ENCODE measurements at regions of chr1 and their contacts with region 1.

Region 1: GRCh38 chr1:66981679-66982078 is 56.9 kb downstream of the MIER1 start:
- DNase-seq: peak in 33 of 35 experiments; percentile 22 to 81 (median 42)
- ATAC-seq: peak; percentile 82 to 91 (median 86)
- H3K4me3 ChIP-seq: peak overlapping the region; percentile 43 to 44
- H3K4me3 Mint-ChIP-seq: peak overlapping the region; percentile 61 to 71 (median 71)
- H3K27ac ChIP-seq: peak overlapping the region; percentile 88
- H3K27ac Mint-ChIP-seq: peak overlapping the region; percentile 89 to 90
- H3K4me1 ChIP-seq: peaks cover 0 to 13% of the 10 kb centered on the region in 2 experiments
- H3K4me1 Mint-ChIP-seq: peaks cover 18 to 37% (median 33%) of the 10 kb centered on the region in 3 donors
- H3K27me3 ChIP-seq: no peaks in the 10 kb centered on the region
- H3K27me3 Mint-ChIP-seq: no peaks in the 10 kb centered on the region

Region 2: GRCh38 chr1:66924756-66925557 is 56.7 kb before region 1 on chr1 and contains the starts of genes DNAI4 and MIER1:
- CTCF ChIA-PET with region 1: interaction called in 1 of 2 experiments, 3 read pairs
- POLR2A ChIA-PET with region 1: interaction called in 1 of 2 experiments, 11 read pairs
- DNase-seq: peak; percentile 88 to 97 (median 95)
- ATAC-seq: peak; percentile 92 to 96 (median 95)
- H3K4me3 ChIP-seq: peak within 1 kb of the TSS; percentile 89 to 92
- H3K4me3 Mint-ChIP-seq: peak within 1 kb of the TSS; percentile 94 to 96 (median 94)
- H3K27ac ChIP-seq: peak within 1 kb of the TSS; percentile 97
- H3K27ac Mint-ChIP-seq: peak within 1 kb of the TSS; percentile 94 to 96
- H3K4me1 ChIP-seq: peaks cover 23 to 27% of the 10 kb centered on the region in 2 experiments
- H3K4me1 Mint-ChIP-seq: peaks cover 53 to 56% (median 54%) of the 10 kb centered on the region in 3 donors
- H3K27me3 ChIP-seq: no peaks in the 10 kb centered on the region
- H3K27me3 Mint-ChIP-seq: no peaks in the 10 kb centered on the region
- total RNA-seq, gene DNAI4: 5.6 to 11.7 (median 7.7) TPM
- total RNA-seq, gene MIER1: 55.3 to 77.1 (median 58.1) TPM

Region 3: GRCh38 chr1:67020304-67020703 is 38.6 kb after region 1 on chr1:
- CTCF ChIA-PET with region 1: no interaction called
- POLR2A ChIA-PET with region 1: no interaction called
- DNase-seq: no peak
- ATAC-seq: no peak
- H3K4me3 ChIP-seq: no peak overlapping the region
- H3K4me3 Mint-ChIP-seq: no peak overlapping the region
- H3K27ac ChIP-seq: no peak overlapping the region
- H3K27ac Mint-ChIP-seq: no peak overlapping the region
- H3K4me1 ChIP-seq: no peaks in the 10 kb centered on the region
- H3K4me1 Mint-ChIP-seq: peaks cover 0 to 6% (median 2%) of the 10 kb centered on the region in 3 donors
- H3K27me3 ChIP-seq: no peaks in the 10 kb centered on the region
- H3K27me3 Mint-ChIP-seq: no peaks in the 10 kb centered on the region

Region 4: DNA sequence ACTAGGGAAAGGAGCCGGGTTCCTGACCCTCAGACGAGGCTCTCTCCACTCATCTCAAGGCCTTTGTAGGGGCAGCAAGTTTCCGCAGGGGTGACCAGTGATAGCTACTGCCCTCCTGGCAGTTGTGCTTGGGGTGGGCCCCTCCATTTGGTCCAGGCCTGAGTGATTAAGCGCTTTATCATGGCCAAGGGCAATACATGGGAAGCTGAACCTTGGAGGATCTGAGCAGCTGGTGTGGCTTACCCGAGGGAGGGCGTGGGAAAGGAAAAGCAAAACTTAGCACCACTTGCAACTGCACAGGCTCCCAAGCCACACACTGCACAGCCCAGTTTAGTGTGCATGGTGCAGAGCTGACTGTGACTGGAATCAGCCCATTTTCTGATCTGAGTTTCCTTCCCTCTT is 751.1 kb after region 1 on chr1:
- CTCF ChIA-PET with region 1: no interaction called
- POLR2A ChIA-PET with region 1: interaction called in 1 of 2 experiments, 12 read pairs
- DNase-seq: no peak
- ATAC-seq: no peak
- H3K4me3 ChIP-seq: no peak overlapping the region
- H3K4me3 Mint-ChIP-seq: no peak overlapping the region
- H3K27ac ChIP-seq: no peak overlapping the region
- H3K27ac Mint-ChIP-seq: no peak overlapping the region
- H3K4me1 ChIP-seq: peaks cover 12 to 19% of the 10 kb centered on the region in 2 experiments
- H3K4me1 Mint-ChIP-seq: peaks cover 12 to 26% (median 25%) of the 10 kb centered on the region in 3 donors
- H3K27me3 ChIP-seq: no peaks in the 10 kb centered on the region
- H3K27me3 Mint-ChIP-seq: no peaks in the 10 kb centered on the region